SK-N-SH (cell line): ENCODE measurements at regions of chr2 and their contacts with region 1.

Region 1: DNA sequence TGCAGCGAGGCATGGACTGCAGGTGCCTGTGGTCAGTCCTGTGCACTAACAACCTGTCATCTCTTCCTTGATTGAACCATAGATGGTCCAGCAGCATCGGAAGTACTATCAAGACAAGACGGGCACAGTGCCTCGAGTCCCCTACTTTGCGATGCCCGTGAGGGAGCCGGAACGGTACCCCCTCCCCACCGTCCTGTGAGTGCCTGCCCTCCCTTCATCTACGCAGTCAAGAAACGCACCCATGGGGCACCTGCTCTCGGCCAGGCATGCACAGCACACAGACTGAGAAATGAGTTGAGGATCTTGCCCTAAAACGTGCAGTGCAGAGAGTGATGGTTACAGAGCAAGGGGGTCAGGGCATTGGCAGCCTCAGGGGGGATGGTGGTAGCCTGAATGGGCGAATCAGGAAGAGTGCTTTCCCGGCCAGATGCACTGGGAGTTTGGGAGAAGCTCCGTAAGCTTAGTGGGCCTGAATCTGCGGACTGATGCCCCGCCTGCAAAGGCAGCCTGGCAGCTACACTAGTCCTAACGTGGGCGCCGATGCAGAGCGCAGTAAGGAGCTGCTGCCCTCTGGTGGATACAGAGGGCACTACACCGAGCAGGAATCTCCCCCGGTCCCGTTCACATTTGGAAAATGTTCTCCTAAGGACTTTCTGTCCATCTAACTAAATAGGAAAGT is 63.6 kb downstream of the CIB4 start:
- DNase-seq: peak; percentile 94
- H3K4me3 ChIP-seq: peak overlapping the region in 1 of 2 experiments; percentile 2; a peak in 1 of 4 replicates
- H3K27ac ChIP-seq: no peak overlapping the region
- H3K4me1 ChIP-seq: peaks cover 0 to 3% of the 10 kb centered on the region in 2 experiments; a peak in 1 of 4 replicates
- H3K27me3 ChIP-seq: peaks cover 67% of the 10 kb centered on the region
- CTCF ChIP-seq: peak; percentile 99
- EP300 ChIP-seq: no peak
- RAD21 ChIP-seq: peak; percentile 98

Region 2: GRCh38 chr2:26169681-26170414 is 407.7 kb before region 1 on chr2:
- CTCF ChIA-PET with region 1: no interaction called
- POLR2A ChIA-PET with region 1: no interaction called
- DNase-seq: no peak
- H3K4me3 ChIP-seq: no peak overlapping the region
- H3K27ac ChIP-seq: no peak overlapping the region
- H3K4me1 ChIP-seq: peaks cover 0 to 12% of the 10 kb centered on the region in 2 experiments; a peak in 1 of 4 replicates
- H3K27me3 ChIP-seq: no peaks in the 10 kb centered on the region
- CTCF ChIP-seq: no peak
- EP300 ChIP-seq: no peak
- RAD21 ChIP-seq: no peak

Region 3: GRCh38 chr2:26336719-26337118 is 240.9 kb before region 1 on chr2:
- CTCF ChIA-PET with region 1: interaction called, 10 read pairs
- POLR2A ChIA-PET with region 1: no interaction called
- DNase-seq: no peak
- H3K4me3 ChIP-seq: no peak overlapping the region
- H3K27ac ChIP-seq: no peak overlapping the region
- H3K4me1 ChIP-seq: peaks cover 0 to 2% of the 10 kb centered on the region in 2 experiments; a peak in 1 of 4 replicates
- H3K27me3 ChIP-seq: no peaks in the 10 kb centered on the region
- CTCF ChIP-seq: no peak
- EP300 ChIP-seq: no peak
- RAD21 ChIP-seq: no peak

Region 4: GRCh38 chr2:26469092-26469710 is 108.4 kb before region 1 on chr2:
- CTCF ChIA-PET with region 1: interaction called, 22 read pairs
- POLR2A ChIA-PET with region 1: no interaction called
- DNase-seq: peak; percentile 83
- H3K4me3 ChIP-seq: peak overlapping the region in 1 of 2 experiments; percentile 31; a peak in 2 of 4 replicates
- H3K27ac ChIP-seq: no peak overlapping the region
- H3K4me1 ChIP-seq: no peaks in the 10 kb centered on the region
- H3K27me3 ChIP-seq: no peaks in the 10 kb centered on the region
- CTCF ChIP-seq: peak; percentile 79
- EP300 ChIP-seq: no peak
- RAD21 ChIP-seq: peak; percentile 79

Region 5: GRCh38 chr2:26534865-26535702 is 42.5 kb before region 1 on chr2:
- CTCF ChIA-PET with region 1: interaction called, 12 read pairs
- POLR2A ChIA-PET with region 1: no interaction called
- DNase-seq: no peak
- H3K4me3 ChIP-seq: no peak overlapping the region
- H3K27ac ChIP-seq: no peak overlapping the region
- H3K4me1 ChIP-seq: peaks cover 3% of the 10 kb centered on the region in 2 experiments; a peak in 3 of 4 replicates
- H3K27me3 ChIP-seq: no peaks in the 10 kb centered on the region
- CTCF ChIP-seq: no peak
- EP300 ChIP-seq: no peak
- RAD21 ChIP-seq: no peak

Region 6: GRCh38 chr2:26591619-26592505 is 14.3 kb after region 1 on chr2:
- CTCF ChIA-PET with region 1: interaction called, 74 read pairs
- POLR2A ChIA-PET with region 1: interaction called, 3 read pairs
- DNase-seq: no peak
- H3K4me3 ChIP-seq: no peak overlapping the region
- H3K27ac ChIP-seq: no peak overlapping the region
- H3K4me1 ChIP-seq: peaks cover 0 to 10% of the 10 kb centered on the region in 2 experiments; a peak in 1 of 4 replicates
- H3K27me3 ChIP-seq: peaks cover 82% of the 10 kb centered on the region
- CTCF ChIP-seq: no peak
- EP300 ChIP-seq: no peak
- RAD21 ChIP-seq: no peak

Region 7: DNA sequence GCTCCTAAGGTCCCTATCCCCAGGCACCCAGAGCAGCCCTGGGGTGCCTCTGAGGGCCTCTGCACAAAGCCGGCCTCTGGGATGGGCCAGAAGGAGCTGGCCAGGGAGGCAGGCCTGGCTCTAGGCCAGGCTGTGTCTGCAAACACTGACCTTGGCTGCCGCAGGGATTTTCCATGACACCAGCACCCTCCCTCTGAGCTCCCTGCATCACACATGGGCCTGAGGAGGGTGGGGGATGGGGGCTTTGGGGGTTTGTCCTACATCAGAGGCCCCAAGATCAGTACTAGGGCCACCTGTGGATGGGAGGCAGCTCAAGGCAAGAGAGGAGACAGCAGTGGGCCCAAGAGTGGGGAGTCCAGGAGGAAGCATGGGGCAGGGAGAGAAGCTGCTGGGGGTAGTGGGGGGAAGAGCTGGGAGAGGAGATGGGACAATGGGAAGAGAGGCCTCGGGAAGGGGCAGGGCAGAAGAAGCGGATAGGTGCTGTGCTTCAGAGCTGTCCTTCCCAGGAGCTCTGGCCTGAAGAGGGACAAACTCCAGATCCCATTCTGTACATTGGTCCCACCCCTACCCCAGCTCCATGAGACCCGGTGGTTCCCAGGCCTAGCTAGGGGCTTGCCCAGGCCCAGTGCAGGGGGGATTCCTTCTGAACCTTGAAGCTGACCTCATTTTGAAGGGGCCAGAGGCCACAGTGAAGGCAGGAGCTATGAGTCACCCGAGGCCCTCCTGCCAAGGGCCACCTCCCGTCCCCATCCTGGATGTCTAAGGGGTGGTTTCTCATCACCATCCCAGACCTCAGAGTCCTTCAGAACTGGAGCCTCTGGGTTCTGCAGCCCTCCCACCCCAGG is 143.0 kb after region 1 on chr2:
- CTCF ChIA-PET with region 1: interaction called, 12 read pairs
- POLR2A ChIA-PET with region 1: no interaction called
- DNase-seq: peak; percentile 92
- H3K4me3 ChIP-seq: no peak overlapping the region
- H3K27ac ChIP-seq: peak overlapping the region; percentile 8 to 30; a peak in 1 of 4 replicates
- H3K4me1 ChIP-seq: peaks cover 25 to 62% of the 10 kb centered on the region in 2 experiments; a peak in 3 of 4 replicates
- H3K27me3 ChIP-seq: no peaks in the 10 kb centered on the region
- CTCF ChIP-seq: no peak
- EP300 ChIP-seq: peak in 1 of 2 experiments; percentile 76; a peak in 2 of 4 replicates
- RAD21 ChIP-seq: peak; percentile 21; the same call in 1 of the 2 replicates

Region 8: GRCh38 chr2:26778076-26778475 is 200.5 kb after region 1 on chr2:
- CTCF ChIA-PET with region 1: no interaction called
- POLR2A ChIA-PET with region 1: no interaction called
- DNase-seq: no peak
- H3K4me3 ChIP-seq: no peak overlapping the region
- H3K27ac ChIP-seq: peak overlapping the region in 1 of 2 experiments; percentile 16; a peak in 1 of 4 replicates
- H3K4me1 ChIP-seq: 0 out of 4 replicates have a peak, but pooled peaks cover 0 to 7% of the 10 kb centered on the region in 2 experiments
- H3K27me3 ChIP-seq: no peaks in the 10 kb centered on the region
- CTCF ChIP-seq: no peak
- EP300 ChIP-seq: no peak
- RAD21 ChIP-seq: no peak

Region 9: GRCh38 chr2:27370026-27370815 is 792.6 kb after region 1 on chr2 and contains the starts of genes EIF2B4 and SNX17:
- CTCF ChIA-PET with region 1: no interaction called
- POLR2A ChIA-PET with region 1: no interaction called
- DNase-seq: peak; percentile 98
- H3K4me3 ChIP-seq: peak within 1 kb of the TSS; percentile 94 to 99
- H3K27ac ChIP-seq: peak within 1 kb of the TSS; percentile 79 to 89
- H3K4me1 ChIP-seq: peaks cover 11 to 22% of the 10 kb centered on the region in 2 experiments; a peak in 3 of 4 replicates
- H3K27me3 ChIP-seq: no peaks in the 10 kb centered on the region
- CTCF ChIP-seq: peak; percentile 84
- EP300 ChIP-seq: no peak; a peak in 1 of 4 replicates
- RAD21 ChIP-seq: peak; percentile 55
- polyA plus RNA-seq, gene EIF2B4: 51.7 and 56.0 TPM in 2 replicates
- polyA plus RNA-seq, gene SNX17: 128 and 145 TPM in 2 replicates

Region 10: DNA sequence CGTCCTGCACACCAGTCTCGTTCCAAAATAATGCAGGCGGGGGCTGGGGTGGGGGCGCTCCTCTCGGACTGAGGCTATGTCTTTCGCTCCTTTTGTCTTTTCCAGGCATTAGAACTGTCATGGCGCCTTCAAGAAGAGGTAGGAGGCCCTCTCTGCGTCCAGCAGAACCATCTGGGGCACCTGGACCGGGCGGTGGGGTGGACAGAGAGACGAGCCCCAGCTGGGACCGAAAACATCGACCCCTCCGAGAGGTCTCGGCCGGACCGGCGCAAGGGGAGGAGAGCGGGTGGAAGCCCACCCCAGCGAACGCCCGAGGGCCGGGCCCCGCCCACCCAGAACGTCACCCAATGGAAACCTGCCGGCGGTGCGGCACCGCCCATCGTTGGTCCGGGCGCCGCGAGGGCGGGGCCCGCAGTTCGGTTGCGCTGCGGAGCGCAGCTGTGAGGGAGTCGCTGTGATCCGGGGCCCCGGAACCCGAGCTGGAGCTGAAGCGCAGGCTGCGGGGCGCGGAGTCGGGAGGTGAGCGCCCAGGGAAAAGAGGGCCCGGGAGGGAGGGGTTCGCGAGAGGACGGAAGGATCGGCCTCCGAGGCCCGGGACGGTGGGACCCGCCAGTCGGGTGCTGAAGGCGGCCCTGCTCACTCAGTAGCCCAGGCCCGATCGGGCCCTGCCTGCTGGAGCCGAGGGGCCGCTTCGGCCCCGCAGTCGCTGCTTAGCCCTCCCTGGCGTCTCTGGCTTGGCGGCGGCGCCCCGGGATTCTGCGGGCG is 850.8 kb after region 1 on chr2 and contains the start of gene NRBP1:
- CTCF ChIA-PET with region 1: no interaction called
- POLR2A ChIA-PET with region 1: no interaction called
- DNase-seq: peak; percentile 99
- H3K4me3 ChIP-seq: peak within 1 kb of the TSS; percentile 74 to 92
- H3K27ac ChIP-seq: peak within 1 kb of the TSS; percentile 92 to 93
- H3K4me1 ChIP-seq: peaks cover 6 to 10% of the 10 kb centered on the region in 2 experiments; a peak in 3 of 4 replicates
- H3K27me3 ChIP-seq: no peaks in the 10 kb centered on the region
- CTCF ChIP-seq: peak; percentile 41
- EP300 ChIP-seq: peak; percentile 4 to 37; a peak in 2 of 4 replicates
- RAD21 ChIP-seq: no peak
- polyA plus RNA-seq, gene NRBP1: 182 and 227 TPM in 2 replicates